ENCODE measurements at regions of chr16 and their contacts with region 1.

Region 1: DNA sequence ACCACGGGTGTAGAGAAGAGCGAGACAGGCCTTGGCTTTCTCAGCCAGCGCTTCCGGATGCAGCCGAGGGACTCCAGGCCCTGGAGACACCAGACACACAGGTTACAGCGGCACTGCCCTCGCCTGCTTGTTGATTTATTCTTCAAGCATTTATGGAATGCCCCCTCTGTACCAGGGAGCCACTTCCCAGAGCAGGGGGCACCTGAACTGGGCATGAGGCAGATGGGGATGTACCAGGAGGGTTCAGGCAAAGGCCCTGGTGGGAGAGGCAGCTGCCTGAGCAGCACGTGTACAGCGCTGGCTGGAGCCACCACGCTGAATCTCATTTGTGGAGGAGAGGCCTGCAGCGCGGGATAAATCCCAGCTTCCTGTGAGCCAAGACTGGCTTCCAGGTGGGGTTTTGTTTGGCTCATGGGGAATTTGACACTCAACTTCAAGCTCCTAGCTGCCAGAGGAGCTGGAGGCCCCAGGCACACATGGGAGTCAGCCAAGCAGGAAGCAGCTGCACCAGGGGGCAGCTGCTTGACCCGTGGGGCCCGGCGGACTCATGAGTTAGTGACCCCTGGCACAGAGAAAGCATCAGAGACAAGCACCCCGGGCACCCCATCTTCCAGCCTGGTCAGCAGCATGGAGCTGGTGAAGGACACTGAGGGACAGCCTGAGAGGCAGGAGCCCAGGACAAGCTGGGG is 59.7 kb downstream of the IL21R start:
- DNase-seq: peak in 1 of 5 donors; percentile 39
- ATAC-seq: no peak
- H3K4me3 ChIP-seq: no peak overlapping the region
- H3K27ac ChIP-seq: peak overlapping the region in 4 of 12 donors; percentile 36 to 73 (median 56)
- H3K4me1 ChIP-seq: peaks cover 0 to 35% (median 20%) of the 10 kb centered on the region in 12 donors
- H3K27me3 ChIP-seq: no peaks in the 10 kb centered on the region
- CTCF ChIP-seq: no peak
- POLR2A ChIP-seq: no peak

Region 2: GRCh38 chr16:27154705-27155521 is 306.7 kb before region 1 on chr16:
- intact Hi-C with region 1: loop called in 4 of 10 experiments (anchors 1 to 5 kb)
- DNase-seq: peak; percentile 37 to 82 (median 46)
- ATAC-seq: peak in 3 of 4 donors; percentile 70 to 86 (median 72)
- H3K4me3 ChIP-seq: no peak overlapping the region
- H3K27ac ChIP-seq: no peak overlapping the region
- H3K4me1 ChIP-seq: peaks cover 0 to 6% (median 0%) of the 10 kb centered on the region in 12 donors
- H3K27me3 ChIP-seq: no peaks in the 10 kb centered on the region
- CTCF ChIP-seq: peak; percentile 79 to 99 (median 95)
- POLR2A ChIP-seq: no peak

Region 3: DNA sequence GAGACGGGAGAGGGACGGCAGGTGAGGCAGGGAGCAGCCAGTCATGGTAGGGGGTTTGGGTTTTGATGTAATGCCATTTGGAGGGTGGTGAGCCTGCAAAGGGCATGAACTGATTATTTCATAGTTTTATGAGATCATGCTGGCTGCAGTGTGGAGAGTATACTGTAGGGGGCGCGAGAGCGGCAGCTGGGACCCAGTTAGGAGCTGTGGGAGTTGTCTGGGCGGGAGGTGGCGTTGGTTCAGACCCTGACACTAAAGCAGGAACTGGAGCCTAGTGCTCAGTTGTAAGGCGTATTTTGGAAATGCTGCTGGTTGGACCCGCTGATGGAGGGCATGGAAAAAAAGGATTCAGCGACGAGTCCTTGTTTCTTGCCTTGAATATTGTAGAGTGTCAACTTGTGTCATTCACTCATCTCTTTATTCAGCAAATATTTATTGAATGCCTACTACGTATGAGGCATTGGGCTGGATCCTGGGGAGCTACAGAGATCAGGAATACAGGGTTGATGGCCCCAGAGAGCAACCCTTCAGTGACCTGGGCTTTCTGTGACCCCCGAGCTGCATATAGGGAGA is 282.0 kb before region 1 on chr16:
- intact Hi-C with region 1: loop called (anchors 1 to 5 kb)
- DNase-seq: peak; percentile 83 to 91 (median 86)
- ATAC-seq: peak; percentile 79 to 98 (median 96)
- H3K4me3 ChIP-seq: no peak overlapping the region
- H3K27ac ChIP-seq: no peak overlapping the region
- H3K4me1 ChIP-seq: peaks cover 0 to 9% (median 0%) of the 10 kb centered on the region in 12 donors
- H3K27me3 ChIP-seq: no peaks in the 10 kb centered on the region
- CTCF ChIP-seq: peak; percentile 85 to 97 (median 93)
- POLR2A ChIP-seq: no peak

Region 4: DNA sequence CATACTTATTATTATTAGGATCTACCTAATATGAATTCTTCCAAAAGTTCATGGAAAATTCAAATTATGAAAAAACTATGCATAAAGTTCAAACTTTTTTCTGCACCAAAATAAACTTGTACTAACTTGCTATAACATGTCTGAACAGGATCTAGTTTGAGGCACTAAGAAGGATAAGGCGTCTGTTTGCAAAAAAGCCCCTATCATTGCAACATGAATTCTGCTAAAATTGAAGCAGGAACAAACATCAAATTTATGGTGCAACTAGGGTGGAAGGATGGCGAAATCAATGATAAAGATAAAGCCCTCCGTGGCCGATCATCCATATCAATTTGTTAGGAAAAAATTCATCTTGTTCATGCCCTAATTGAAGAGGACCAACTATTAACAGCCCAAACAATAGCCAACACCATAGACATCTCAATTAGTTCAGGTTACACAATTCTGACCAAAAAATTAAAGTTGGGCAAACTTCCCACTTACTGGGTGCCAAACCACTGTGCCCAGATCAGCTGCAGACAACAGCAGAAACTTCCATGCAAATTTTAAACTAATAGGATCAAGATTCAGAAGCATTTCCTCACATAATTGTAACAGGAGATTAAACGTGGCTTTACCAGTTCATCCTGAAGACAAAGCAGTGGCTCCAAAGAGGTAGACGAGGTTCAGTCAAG is 46.7 kb before region 1 on chr16:
- intact Hi-C with region 1: no loop called
- DNase-seq: no peak
- ATAC-seq: no peak
- H3K4me3 ChIP-seq: no peak overlapping the region
- H3K27ac ChIP-seq: peak overlapping the region in 1 of 12 donors; percentile 54
- H3K4me1 ChIP-seq: peaks cover 0 to 19% (median 0%) of the 10 kb centered on the region in 12 donors
- H3K27me3 ChIP-seq: no peaks in the 10 kb centered on the region
- CTCF ChIP-seq: no peak
- POLR2A ChIP-seq: no peak

Region 5: GRCh38 chr16:27529962-27530361 is 68.3 kb after region 1 on chr16:
- intact Hi-C with region 1: loop called in 1 of 10 experiments (anchors 10 kb)
- DNase-seq: no peak
- ATAC-seq: no peak
- H3K4me3 ChIP-seq: no peak overlapping the region
- H3K27ac ChIP-seq: peak overlapping the region in 8 of 12 donors; percentile 40 to 97 (median 70)
- H3K4me1 ChIP-seq: peaks cover 0 to 57% (median 12%) of the 10 kb centered on the region in 12 donors
- H3K27me3 ChIP-seq: no peaks in the 10 kb centered on the region
- CTCF ChIP-seq: no peak
- POLR2A ChIP-seq: no peak